Gastrocnemius medialis (tissue), 4 donors: ENCODE measurements at regions of chr3 and their contacts with region 1.

Region 1: DNA sequence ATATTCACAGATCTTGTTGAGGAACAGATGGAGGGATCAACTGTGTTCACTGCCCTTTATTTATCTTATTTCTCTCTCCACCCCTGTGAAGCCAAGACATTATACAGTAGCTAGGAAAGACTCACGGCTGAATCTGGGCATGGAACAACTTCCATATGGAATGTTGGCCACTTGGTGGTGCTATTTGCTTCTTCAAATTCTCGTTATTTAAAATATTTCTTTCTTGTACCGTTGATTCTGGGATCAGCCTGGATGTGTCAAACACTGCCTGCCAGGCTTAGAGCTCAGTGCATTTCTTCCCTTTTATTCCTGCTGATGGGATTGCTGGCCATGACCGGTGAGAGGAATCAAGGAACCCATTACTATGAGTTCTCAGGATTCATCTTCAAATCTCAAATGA is 17.5 kb upstream of the GASK1A start:
- DNase-seq: peak in 1 of 2 donors; percentile 10
- ATAC-seq: peak; percentile 90 to 91
- H3K4me3 ChIP-seq: no peak overlapping the region
- H3K27ac ChIP-seq: no peak overlapping the region
- H3K4me1 ChIP-seq: no peaks in the 10 kb centered on the region
- H3K27me3 ChIP-seq: no peaks in the 10 kb centered on the region
- CTCF ChIP-seq: peak; percentile 55 to 77 (median 66)
- POLR2A ChIP-seq: no peak

Region 2: GRCh38 chr3:43009547-43009946 is 47.9 kb after region 1 on chr3:
- in situ Hi-C with region 1: no loop called
- intact Hi-C with region 1: loop called (anchors 1 kb)
- DNase-seq: no peak
- ATAC-seq: peak; percentile 27 to 52
- H3K4me3 ChIP-seq: no peak overlapping the region
- H3K27ac ChIP-seq: no peak overlapping the region
- H3K4me1 ChIP-seq: no peaks in the 10 kb centered on the region
- H3K27me3 ChIP-seq: no peaks in the 10 kb centered on the region
- CTCF ChIP-seq: peak in 3 of 5 experiments; percentile 14 to 45 (median 33)
- POLR2A ChIP-seq: no peak

Region 3: GRCh38 chr3:43087249-43087776 is 125.7 kb after region 1 on chr3:
- in situ Hi-C with region 1: loop called in 2 of 4 experiments (anchors 10 to 25 kb)
- intact Hi-C with region 1: loop called (anchors 5 kb)
- DNase-seq: no peak
- ATAC-seq: no peak
- H3K4me3 ChIP-seq: no peak overlapping the region
- H3K27ac ChIP-seq: no peak overlapping the region
- H3K4me1 ChIP-seq: peaks cover 12 to 17% of the 10 kb centered on the region in 2 donors
- H3K27me3 ChIP-seq: no peaks in the 10 kb centered on the region
- CTCF ChIP-seq: no peak
- POLR2A ChIP-seq: no peak

Region 4: DNA sequence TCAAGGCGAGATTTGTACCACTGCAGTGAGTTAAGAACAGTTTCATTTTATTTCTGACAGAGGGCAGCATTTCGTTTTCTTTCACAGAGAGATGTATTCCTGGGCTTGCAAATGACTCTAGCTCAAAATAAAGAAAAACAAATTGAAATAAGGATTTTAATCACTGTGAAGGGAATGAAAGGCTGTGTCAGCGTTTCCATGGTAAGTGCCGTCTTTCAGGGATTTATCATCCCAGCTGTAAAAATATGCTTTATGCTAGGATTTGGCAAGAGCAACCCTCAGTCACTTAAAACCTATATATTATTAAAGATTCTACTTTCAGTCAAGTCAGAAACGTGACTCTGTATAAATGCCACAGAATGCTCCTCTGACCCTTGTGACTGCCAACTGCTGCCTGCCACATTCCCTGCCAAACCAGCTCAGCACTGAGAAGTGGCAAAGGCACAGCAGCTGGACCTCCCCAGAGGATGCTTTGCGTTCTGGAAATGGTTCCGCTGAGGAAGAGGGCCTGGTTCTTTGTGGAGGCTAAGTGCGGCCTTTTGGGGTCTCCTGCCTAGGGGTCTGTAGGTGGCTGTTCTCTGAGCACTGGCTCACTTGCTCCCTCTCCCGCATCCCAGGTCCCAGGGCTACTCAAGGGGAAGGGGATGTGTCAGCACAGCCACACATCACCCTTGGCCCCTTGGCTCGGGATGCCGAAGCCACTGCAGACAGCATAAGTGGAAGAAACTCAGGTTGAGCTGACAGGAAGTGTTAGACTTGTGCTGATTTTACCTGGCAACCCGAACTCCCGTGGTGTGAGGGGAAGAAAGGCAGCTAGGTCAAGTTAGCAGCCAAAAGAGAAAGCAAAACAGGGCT is 200.8 kb after region 1 on chr3:
- in situ Hi-C with region 1: loop called (anchors 5 to 25 kb)
- intact Hi-C with region 1: no loop called
- DNase-seq: no peak
- ATAC-seq: no peak
- H3K4me3 ChIP-seq: no peak overlapping the region
- H3K27ac ChIP-seq: peak overlapping the region in 3 of 4 donors; percentile 6 to 43 (median 36)
- H3K4me1 ChIP-seq: peaks cover 0 to 7% of the 10 kb centered on the region in 2 donors
- H3K27me3 ChIP-seq: no peaks in the 10 kb centered on the region
- CTCF ChIP-seq: peak in 3 of 5 experiments; percentile 20 to 43 (median 35)
- POLR2A ChIP-seq: no peak

Region 5: DNA sequence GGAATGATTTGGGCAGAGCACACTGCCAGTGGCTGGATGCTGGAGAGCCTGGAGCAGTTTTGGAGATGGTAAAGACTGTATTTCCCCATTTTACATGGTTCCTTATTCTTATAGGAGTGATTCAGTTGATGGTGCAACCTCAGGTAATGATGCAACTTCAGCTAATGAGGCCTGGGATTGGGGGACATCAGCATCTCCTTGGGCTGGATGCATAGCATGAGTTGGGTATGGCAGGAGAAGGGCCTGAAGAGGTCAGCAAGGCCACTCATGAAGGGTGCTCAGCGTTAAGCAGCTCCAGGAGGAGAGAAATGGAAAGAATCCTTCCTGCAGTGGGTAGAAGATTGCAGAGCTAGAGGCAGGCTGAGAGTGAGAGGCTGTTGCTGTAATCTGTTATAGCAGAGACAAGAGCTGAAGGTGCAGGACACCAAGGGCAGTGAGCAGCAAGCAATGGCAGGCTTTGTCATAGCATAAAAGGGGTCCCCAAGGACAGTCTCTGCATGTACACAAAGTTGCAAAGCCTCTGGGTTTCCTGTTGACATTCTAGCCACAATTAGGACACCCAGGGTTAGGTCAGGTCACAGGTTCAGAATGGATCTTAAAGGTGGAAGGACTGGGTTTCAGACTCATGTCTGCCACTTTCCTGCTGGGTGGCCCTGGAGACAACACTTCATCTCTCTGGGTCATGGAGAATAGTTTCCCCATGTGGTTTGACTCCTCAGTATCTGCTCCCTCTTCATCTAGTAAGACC is 295.3 kb after region 1 on chr3:
- in situ Hi-C with region 1: no loop called
- intact Hi-C with region 1: no loop called
- DNase-seq: no peak
- ATAC-seq: no peak
- H3K4me3 ChIP-seq: no peak overlapping the region
- H3K27ac ChIP-seq: no peak overlapping the region
- H3K4me1 ChIP-seq: no peaks in the 10 kb centered on the region
- H3K27me3 ChIP-seq: no peaks in the 10 kb centered on the region
- CTCF ChIP-seq: no peak
- POLR2A ChIP-seq: no peak

Region 6: GRCh38 chr3:43512754-43513404 is 551.2 kb after region 1 on chr3:
- in situ Hi-C with region 1: loop called (anchors 10 to 25 kb)
- intact Hi-C with region 1: no loop called
- DNase-seq: no peak
- ATAC-seq: no peak
- H3K4me3 ChIP-seq: no peak overlapping the region
- H3K27ac ChIP-seq: no peak overlapping the region
- H3K4me1 ChIP-seq: no peaks in the 10 kb centered on the region
- H3K27me3 ChIP-seq: no peaks in the 10 kb centered on the region
- CTCF ChIP-seq: no peak
- POLR2A ChIP-seq: no peak